ENCODE measurements at regions of chr3 and their contacts with region 1.

Region 1: DNA sequence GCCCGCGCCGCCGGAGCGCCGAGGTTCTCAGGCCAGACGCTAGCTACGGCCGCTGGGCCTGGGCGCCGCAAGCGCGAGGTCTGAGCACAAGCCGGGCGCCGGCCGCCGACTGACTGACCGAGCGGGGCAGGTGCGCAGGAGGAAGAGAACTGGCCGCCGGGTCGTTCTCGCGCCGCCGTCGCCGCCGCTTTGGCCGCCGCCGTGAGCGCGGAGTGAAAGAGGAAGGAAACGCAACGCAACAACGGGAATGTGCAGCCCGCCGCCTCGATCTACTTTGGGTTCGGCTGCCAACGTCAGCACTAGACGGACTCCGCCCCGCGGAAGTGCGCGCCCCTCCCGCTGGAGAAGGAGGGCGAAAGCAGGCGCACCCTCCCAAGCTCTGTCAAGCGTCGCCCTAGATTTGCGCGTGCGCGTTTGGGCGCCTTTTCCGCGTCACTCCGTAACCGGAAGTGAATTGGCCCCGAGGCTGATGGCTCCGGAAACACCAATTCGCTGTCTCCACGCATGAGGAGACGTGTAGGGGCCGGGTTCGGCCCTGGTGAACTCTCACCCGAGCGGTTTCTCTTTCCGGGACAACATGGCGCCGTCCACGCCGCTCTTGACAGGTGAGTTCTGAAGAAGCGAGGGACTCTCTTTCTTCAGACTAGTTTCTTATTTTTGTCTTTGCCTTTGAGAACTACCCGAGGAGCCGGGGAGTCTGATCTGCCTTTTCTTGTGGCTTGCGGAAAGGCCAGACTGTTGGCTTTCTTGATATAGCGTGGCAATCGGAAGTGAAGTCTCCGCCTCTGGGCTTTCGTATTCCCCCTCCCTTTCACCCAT is at the starts of genes EIF2A and SERP1:
- DNase-seq: peak; percentile 97 to 99
- H3K4me3 ChIP-seq: peak within 1 kb of the TSS; percentile 84 to 91
- H3K27ac ChIP-seq: peak within 1 kb of the TSS; percentile 98
- H3K4me1 ChIP-seq: peaks cover 0 to 32% (median 25%) of the 10 kb centered on the region in 4 donors
- H3K27me3 ChIP-seq: no peaks in the 10 kb centered on the region
- CTCF ChIP-seq: no peak

Region 2: DNA sequence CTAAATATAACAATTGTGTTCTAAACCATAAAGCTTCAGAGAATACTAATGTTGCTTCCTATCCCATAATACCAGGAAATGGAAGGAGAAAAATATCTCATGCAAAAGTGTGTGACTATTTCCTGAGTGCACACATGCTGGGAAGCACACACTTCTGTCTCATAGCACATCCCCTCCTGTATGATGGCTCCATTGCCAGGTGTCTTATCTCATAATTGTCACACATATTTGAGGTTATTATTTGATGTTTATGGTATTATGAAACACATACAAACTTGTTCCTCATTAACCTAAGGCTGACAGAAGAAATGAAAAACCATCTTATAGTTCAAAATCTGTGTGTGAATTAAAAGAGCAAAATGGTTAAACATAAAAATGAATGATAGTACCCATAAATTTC is 65.6 kb before region 1 on chr3:
- intact Hi-C with region 1: no loop called
- DNase-seq: no peak
- H3K4me3 ChIP-seq: no peak overlapping the region
- H3K27ac ChIP-seq: no peak overlapping the region
- H3K4me1 ChIP-seq: no peaks in the 10 kb centered on the region
- H3K27me3 ChIP-seq: no peaks in the 10 kb centered on the region
- CTCF ChIP-seq: no peak

Region 3: DNA sequence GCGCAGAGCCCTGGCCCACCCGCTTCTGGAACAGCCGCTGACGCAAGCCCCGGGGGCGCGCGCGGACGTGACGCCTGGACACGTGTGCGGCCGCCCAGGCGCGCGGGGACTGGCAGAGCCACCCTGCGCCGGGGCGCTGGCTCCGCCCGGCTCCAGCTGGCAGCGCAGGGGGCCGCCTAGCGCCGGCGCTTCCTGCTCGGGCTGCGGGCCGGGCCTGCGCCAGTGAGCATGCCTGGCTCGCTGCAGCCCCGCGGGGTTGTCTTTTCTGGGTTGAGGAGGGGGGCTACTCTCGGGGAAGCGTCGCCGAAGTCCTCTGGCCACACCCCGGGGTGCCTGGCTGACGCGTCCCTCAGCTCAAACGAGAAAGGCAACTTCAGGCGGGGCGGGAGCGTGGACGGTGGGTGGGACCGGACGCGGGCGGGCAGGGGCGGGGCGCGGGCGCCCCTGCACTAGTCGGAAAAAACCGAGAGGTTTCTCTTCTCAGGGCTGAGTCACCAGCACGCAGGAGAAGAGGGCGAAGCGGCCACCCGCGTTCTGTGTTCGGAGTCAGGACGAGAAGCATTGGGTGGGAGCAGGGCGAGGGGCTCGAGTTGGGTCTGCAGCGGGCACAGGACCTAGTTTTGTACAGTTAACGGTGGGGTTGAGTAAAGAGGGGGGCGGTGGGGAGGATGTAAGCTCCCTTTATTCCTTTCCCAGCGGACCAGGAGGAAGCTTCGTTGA is 216.8 kb after region 1 on chr3 and contains the start of gene SIAH2:
- intact Hi-C with region 1: loop called (anchors 5 kb)
- DNase-seq: peak; percentile 92 to 96
- H3K4me3 ChIP-seq: peak within 1 kb of the TSS; percentile 77 to 90
- H3K27ac ChIP-seq: peak within 1 kb of the TSS; percentile 99
- H3K4me1 ChIP-seq: peaks cover 3 to 40% (median 24%) of the 10 kb centered on the region in 4 donors
- H3K27me3 ChIP-seq: no peaks in the 10 kb centered on the region
- CTCF ChIP-seq: no peak

Measured in tibial artery (tissue), 4 donors.